KBM-7 (cell line): ENCODE measurements at regions of chr18 and their contacts with region 1.

Region 1: DNA sequence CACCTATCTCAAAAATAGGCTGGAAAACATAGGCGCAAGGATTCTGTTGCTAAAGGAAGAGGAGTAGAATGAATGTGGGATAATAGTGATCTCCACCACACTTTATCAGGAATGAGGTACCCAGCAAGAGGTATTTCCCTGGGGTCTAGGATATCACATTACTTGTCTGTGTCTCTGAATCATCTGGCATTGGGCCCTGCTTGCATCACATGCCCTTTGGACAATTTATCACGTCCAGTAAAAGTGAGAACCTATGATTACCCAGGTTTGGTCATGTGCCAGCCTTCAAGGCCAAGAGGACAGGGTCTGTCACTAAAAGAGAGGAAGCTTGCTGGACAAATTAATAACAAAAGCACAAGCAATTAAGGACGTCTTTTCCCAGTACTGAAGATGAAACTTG is 11.4 kb upstream of the TRAPPC8 start:
- DNase-seq: no peak

Region 2: DNA sequence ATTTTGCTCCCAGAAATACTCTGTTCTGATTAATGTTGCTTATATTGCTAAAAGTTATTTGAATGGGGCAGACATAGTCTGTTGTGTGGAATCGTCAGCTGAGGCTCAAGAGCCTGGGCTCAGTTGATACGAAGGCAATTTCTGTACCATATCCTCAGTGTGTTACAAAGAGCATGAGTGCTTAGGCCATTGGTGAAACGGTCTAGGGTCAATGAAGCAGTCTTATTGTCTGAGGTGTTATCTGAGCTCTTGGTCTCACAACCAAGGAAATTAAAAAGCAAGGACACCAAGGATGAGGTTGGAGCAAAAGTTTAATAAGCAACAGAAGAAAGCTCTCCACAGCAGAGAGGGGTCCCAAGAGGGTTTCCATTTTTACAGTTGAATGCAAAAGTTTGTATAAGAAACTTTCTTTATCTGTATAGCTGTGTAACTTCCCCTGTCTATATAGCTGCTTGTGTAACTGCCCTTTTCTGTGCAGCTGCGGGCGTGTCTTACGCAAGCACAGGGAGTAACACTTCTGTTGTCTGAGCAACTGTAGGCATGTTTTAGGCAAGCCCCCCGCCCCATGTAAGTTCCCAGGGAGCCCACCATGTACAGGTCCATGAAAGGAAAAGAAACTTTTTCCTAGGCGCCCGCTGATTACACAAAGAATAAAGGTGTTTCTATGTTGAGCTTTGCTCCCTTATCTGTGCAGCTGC is 751.1 kb before region 1 on chr18:
- in situ Hi-C with region 1: no loop called
- DNase-seq: peak; percentile 80

Region 3: GRCh38 chr18:31555971-31556747 is 398.2 kb before region 1 on chr18:
- in situ Hi-C with region 1: loop called (anchors 25 kb)
- DNase-seq: peak; percentile 84